Heart left ventricle (tissue), 16 donors: ENCODE measurements at regions of chr13 and their contacts with region 1.

Region 1: DNA sequence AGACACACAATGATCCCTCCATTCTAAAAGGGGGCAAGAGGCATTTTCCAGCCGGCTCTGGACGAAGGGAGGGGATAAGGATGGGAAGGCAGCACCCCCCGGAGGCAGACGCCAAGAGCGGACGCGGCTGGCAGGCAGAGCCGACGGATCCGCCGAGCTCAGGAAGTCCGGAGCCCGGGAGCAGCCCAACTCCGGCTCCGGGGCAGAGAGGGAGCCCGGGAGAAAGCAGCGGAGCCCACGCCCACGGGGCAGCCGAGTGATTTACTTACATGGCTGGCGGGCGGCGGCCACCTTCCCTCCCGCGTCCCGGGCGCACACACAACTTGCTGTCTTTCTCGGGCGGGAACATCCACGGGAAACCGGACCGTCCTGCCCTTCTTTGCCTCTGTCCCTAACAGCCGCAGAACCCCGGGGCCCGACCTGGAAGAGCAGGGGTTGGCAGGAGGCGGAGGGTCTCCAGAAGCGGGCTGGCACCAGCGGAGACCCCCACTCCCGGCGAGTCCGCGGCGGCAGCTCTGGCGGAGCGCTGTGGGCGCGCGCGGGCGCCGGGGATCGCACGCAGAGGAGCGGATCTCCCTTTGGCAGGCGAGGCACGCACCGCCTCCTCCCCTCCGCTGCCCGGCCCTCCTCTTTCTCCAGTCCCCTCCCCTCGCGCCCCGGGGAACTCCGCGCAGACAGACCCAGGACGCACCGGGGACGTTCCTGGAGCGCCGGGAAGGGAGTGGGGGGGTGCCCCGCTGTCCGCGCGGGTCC is at the start of gene LHFPL6:
- DNase-seq: peak; percentile 91 to 94 (median 94)
- ATAC-seq: peak; percentile 81 to 97 (median 94)
- H3K4me3 ChIP-seq: peak within 1 kb of the TSS; percentile 79 to 98 (median 90)
- H3K27ac ChIP-seq: peak within 1 kb of the TSS; percentile 85 to 99 (median 93)
- H3K4me1 ChIP-seq: peaks cover 0 to 38% (median 19%) of the 10 kb centered on the region in 12 donors
- H3K27me3 ChIP-seq: peaks cover 0 to 15% (median 0%) of the 10 kb centered on the region in 9 donors
- CTCF ChIP-seq: peak in 11 of 12 donors; percentile 18 to 61 (median 46)
- POLR2A ChIP-seq: peak in 1 of 2 donors; percentile 89
- total RNA-seq, gene LHFPL6: 34.4 to 74.4 (median 55.3) TPM

Region 2: GRCh38 chr13:39273953-39274738 is 328.6 kb before region 1 on chr13:
- intact Hi-C with region 1: loop called in 4 of 10 experiments (anchors 2 to 5 kb)
- DNase-seq: no peak
- ATAC-seq: peak in 2 of 4 donors; percentile 24 to 50
- H3K4me3 ChIP-seq: no peak overlapping the region
- H3K27ac ChIP-seq: no peak overlapping the region
- H3K4me1 ChIP-seq: peaks cover 0 to 22% (median 12%) of the 10 kb centered on the region in 12 donors
- H3K27me3 ChIP-seq: no peaks in the 10 kb centered on the region
- CTCF ChIP-seq: peak in 10 of 12 donors; percentile 5 to 44 (median 19)
- POLR2A ChIP-seq: no peak

Region 3: DNA sequence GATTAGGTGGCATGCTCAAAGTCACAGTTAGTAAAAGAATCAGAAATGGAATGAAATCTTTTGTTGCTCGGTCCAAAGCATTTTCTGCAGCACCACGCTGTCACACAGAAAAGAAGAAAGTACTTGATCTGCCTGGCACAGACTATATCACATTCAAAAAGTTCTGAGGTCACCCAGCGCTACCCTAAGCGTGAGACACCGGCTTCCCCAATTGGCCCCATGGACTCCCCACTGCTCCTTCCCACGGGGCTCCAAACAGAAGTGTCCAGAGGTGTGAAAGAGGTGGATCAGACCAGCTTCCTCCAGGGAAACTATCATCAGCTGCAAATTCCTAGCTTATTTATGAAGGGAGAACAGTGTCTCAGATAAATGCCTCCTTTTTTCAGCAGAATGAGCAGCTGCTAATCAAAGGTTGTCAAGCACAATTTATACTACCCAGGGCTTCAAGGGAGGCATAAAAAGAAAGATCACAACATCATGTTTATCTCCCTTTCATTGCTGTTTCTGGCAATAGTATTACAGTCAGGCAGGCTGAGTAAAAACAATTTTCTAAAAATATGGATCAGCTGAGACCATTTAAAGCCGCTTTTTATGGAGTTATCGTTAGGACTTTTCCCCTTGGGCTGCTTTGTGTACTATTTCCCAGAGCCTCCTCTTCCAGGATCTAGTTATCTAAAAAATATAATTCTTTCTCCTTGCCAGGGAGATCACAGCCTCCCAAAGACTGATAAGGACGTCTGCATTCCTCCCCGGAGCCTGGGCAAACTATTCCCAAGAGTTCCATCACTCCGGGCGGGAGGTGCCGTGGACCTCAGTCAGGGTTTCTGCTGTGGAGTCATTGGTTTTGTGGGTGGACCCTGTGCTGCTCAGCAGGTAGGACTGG is 207.8 kb before region 1 on chr13:
- intact Hi-C with region 1: loop called in 1 of 10 experiments (anchors 5 kb)
- DNase-seq: peak in 1 of 5 donors; percentile 39
- ATAC-seq: peak; percentile 29 to 58 (median 48)
- H3K4me3 ChIP-seq: peak overlapping the region in 2 of 12 donors; percentile 0 to 12
- H3K27ac ChIP-seq: peak overlapping the region in 11 of 12 donors; percentile 4 to 70 (median 41)
- H3K4me1 ChIP-seq: peaks cover 0 to 72% (median 33%) of the 10 kb centered on the region in 12 donors
- H3K27me3 ChIP-seq: no peaks in the 10 kb centered on the region
- CTCF ChIP-seq: no peak
- POLR2A ChIP-seq: no peak

Region 4: DNA sequence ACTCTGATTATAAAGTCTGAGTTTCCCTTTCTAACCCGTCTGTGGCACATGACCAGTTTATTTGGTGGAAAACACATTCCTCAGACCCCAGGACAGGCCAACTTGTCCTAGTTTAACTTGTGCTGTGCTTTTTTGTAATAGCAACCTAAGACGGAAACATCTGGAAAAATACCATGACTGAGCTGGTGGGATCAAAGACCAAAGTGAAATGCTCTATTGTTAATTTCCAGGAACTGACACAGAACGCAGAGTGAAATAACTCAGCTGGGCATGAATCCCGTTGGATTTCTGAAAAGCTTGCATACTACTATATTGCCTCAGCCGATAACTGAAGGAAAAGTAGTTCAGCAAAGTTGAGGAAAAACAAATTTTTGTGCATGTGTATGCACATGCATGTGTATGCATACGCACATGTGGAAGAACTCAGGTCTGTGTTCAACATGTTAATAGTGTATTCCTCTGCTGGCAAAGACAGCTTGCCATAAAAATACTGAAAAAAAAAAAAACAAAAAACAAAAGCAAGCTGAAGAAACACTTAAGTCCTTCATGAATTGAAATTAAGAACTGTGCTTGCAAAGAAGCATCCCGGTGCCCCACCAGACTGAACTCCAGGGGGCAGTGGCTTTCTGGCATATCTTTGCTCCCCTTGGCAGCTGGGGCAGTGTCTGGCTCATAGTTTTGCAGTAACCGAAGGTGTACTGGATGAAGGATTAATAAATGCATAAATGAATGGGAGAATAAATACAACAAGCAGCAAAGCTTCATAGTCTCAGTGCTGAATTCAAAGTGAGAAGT is 187.6 kb before region 1 on chr13:
- intact Hi-C with region 1: loop called (anchors 1 to 5 kb)
- DNase-seq: peak; percentile 65 to 75 (median 68)
- ATAC-seq: peak; percentile 65 to 87 (median 78)
- H3K4me3 ChIP-seq: peak overlapping the region in 7 of 12 donors; percentile 3 to 16 (median 10)
- H3K27ac ChIP-seq: peak overlapping the region; percentile 52 to 83 (median 70)
- H3K4me1 ChIP-seq: peaks cover 0 to 88% (median 71%) of the 10 kb centered on the region in 12 donors
- H3K27me3 ChIP-seq: no peaks in the 10 kb centered on the region
- CTCF ChIP-seq: peak; percentile 35 to 75 (median 64)
- POLR2A ChIP-seq: no peak

Region 5: GRCh38 chr13:39510316-39510695 is 92.5 kb before region 1 on chr13:
- intact Hi-C with region 1: loop called in 2 of 10 experiments (anchors 5 kb)
- DNase-seq: no peak
- ATAC-seq: peak in 1 of 4 donors; percentile 18
- H3K4me3 ChIP-seq: no peak overlapping the region
- H3K27ac ChIP-seq: peak overlapping the region in 1 of 12 donors; percentile 18
- H3K4me1 ChIP-seq: peaks cover 4 to 67% (median 26%) of the 10 kb centered on the region in 12 donors
- H3K27me3 ChIP-seq: no peaks in the 10 kb centered on the region
- CTCF ChIP-seq: no peak
- POLR2A ChIP-seq: no peak

Region 6: GRCh38 chr13:39521701-39522100 is 81.1 kb before region 1 on chr13:
- intact Hi-C with region 1: loop called in 4 of 10 experiments (anchors 5 kb)
- DNase-seq: no peak
- ATAC-seq: no peak
- H3K4me3 ChIP-seq: no peak overlapping the region
- H3K27ac ChIP-seq: peak overlapping the region in 1 of 12 donors; percentile 2
- H3K4me1 ChIP-seq: peaks cover 3 to 86% (median 55%) of the 10 kb centered on the region in 12 donors
- H3K27me3 ChIP-seq: no peaks in the 10 kb centered on the region
- CTCF ChIP-seq: no peak
- POLR2A ChIP-seq: no peak

Region 7: GRCh38 chr13:39655041-39655568 is 52.3 kb after region 1 on chr13:
- intact Hi-C with region 1: no loop called
- DNase-seq: no peak
- ATAC-seq: peak in 1 of 4 donors; percentile 8
- H3K4me3 ChIP-seq: peak overlapping the region; percentile 66 to 98 (median 82)
- H3K27ac ChIP-seq: peak overlapping the region in 11 of 12 donors; percentile 39 to 86 (median 77)
- H3K4me1 ChIP-seq: peaks cover 0 to 24% (median 8%) of the 10 kb centered on the region in 12 donors
- H3K27me3 ChIP-seq: no peaks in the 10 kb centered on the region
- CTCF ChIP-seq: no peak
- POLR2A ChIP-seq: no peak

Region 8: DNA sequence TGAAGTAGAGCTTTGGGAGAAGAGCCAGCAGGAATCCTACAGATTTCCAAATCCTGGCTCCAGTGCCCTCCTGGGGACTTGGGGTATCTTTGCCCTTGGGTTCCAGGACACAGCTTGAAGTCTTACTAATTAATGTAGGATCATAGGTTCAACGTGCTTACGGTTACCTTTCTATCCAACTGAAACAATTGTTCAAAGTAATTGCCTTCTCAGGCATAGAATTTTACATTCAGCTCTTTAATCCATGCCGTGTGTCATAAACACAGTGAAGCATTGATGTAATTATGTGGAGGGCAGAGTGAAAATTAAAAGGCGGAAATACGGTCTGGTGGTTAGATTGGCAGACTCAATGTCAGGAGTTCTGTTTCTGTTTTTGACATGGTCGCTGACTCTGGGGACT is 223.1 kb after region 1 on chr13:
- intact Hi-C with region 1: no loop called
- DNase-seq: no peak
- ATAC-seq: no peak
- H3K4me3 ChIP-seq: no peak overlapping the region
- H3K27ac ChIP-seq: no peak overlapping the region
- H3K4me1 ChIP-seq: no peaks in the 10 kb centered on the region
- H3K27me3 ChIP-seq: no peaks in the 10 kb centered on the region
- CTCF ChIP-seq: no peak
- POLR2A ChIP-seq: no peak